ENCODE measurements at regions of chr19 and their contacts with region 1.

Region 1: DNA sequence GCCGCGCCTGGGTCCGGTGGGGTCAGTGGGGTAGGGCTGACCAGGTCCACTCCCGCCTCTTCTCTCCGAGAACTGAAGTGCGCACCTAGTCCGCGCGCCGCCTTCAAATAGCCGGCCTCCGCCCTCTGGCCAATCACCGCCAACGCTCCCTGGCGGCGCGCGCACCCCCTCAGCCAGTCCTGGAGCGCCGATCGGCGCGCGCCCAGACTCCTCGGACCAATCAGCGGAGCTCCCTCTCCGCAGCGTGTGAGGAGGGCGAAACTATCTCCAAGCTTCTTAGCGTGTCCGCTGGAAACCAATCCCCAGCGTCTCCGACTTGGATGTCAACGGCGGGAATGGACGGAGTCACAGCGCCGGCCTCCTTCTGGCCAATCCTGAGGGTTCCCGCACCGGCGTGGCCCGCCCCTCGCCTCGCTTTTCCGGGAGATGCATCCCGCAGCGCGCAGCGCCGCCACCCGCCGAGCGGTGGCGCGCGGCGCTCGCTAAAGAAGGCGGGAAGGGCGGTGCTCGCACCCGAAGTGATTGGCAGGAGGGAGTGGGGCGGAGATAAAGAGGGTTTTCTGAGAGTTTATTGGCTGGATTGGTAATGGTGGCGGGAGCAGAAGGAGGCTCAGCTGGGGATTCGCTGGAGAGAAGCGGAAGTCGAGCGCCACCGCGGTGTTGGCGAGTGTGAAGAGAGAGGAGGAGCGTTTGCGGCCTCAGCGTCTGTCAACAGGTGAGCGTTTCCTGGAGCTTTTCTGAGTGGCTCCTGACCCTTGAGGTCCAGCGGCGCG is at the start of gene ASF1B:
- DNase-seq: peak; percentile 98 to 99
- H3K4me3 ChIP-seq: peak within 1 kb of the TSS; percentile 79
- H3K27ac ChIP-seq: peak within 1 kb of the TSS; percentile 80
- H3K4me1 ChIP-seq: peaks cover 29% of the 10 kb centered on the region
- H3K27me3 ChIP-seq: no peaks in the 10 kb centered on the region
- CTCF ChIP-seq: peak; percentile 65
- total RNA-seq, gene ASF1B: 67.4 and 71.2 TPM in 2 replicates

Region 2: DNA sequence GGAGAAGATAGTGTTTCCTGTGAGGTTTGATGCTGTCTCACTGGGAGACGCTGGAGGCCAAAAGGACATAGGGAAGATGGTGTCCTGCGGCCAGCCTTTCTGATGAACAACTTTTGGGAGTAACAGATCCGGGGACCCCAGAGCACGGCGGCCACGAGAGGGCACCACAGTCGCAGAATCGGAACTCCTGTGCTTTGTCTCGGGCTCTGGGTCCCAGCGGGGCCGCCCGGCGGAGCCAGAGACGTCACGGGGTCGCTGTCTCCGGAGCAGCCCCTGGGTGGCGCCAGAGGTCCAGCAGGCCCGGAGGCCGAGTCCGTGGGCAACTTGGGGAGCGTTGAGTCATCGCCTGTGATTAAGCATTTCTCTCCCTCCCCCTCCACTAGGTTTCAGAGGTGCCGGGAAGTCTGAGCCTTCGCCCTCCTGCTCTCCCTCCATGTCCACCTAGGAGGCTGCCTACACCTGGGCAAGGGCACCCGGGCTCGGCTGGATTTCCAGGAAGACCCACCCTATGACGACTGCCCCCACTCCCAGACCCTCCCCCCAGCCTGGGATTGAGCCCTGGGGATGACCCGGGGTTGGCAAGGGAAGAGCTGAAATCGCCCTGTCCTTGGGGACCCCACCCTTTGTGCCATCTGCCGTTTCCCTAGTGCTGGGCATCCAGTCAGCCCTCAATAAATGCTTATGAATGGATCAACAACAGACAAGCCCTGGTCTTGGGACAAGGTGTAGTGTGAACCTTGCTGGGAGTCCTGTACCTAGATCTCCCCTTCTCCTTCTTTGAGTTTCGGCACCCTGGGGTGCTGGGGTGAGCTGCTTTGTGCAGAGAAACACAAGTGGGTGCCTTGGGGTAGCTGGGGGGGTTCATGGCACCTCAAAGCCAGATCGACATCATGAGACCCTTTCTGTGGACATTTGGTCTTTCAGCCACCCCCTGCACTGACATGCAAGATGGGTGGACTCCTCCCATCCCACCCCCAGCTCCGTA is 256.3 kb before region 1 on chr19:
- CTCF ChIA-PET with region 1: interaction called, 6 read pairs
- POLR2A ChIA-PET with region 1: interaction called, 3 read pairs
- intact Hi-C with region 1: loop called (anchors 1 kb)
- DNase-seq: peak; percentile 91 to 98
- H3K4me3 ChIP-seq: peak overlapping the region; percentile 19; the same call in 1 of the 2 replicates
- H3K27ac ChIP-seq: peak overlapping the region; percentile 63
- H3K4me1 ChIP-seq: peaks cover 16% of the 10 kb centered on the region
- H3K27me3 ChIP-seq: no peaks in the 10 kb centered on the region
- CTCF ChIP-seq: peak; percentile 100

Region 3: GRCh38 chr19:14081325-14082093 is 55.2 kb before region 1 on chr19:
- CTCF ChIA-PET with region 1: interaction called, 7 read pairs
- POLR2A ChIA-PET with region 1: no interaction called
- intact Hi-C with region 1: loop called (anchors 2 kb)
- DNase-seq: peak; percentile 99
- H3K4me3 ChIP-seq: peak overlapping the region; percentile 85
- H3K27ac ChIP-seq: peak overlapping the region; percentile 71
- H3K4me1 ChIP-seq: peaks cover 16% of the 10 kb centered on the region
- H3K27me3 ChIP-seq: no peaks in the 10 kb centered on the region
- CTCF ChIP-seq: peak; percentile 17; the same call in 1 of the 2 replicates

Region 4: DNA sequence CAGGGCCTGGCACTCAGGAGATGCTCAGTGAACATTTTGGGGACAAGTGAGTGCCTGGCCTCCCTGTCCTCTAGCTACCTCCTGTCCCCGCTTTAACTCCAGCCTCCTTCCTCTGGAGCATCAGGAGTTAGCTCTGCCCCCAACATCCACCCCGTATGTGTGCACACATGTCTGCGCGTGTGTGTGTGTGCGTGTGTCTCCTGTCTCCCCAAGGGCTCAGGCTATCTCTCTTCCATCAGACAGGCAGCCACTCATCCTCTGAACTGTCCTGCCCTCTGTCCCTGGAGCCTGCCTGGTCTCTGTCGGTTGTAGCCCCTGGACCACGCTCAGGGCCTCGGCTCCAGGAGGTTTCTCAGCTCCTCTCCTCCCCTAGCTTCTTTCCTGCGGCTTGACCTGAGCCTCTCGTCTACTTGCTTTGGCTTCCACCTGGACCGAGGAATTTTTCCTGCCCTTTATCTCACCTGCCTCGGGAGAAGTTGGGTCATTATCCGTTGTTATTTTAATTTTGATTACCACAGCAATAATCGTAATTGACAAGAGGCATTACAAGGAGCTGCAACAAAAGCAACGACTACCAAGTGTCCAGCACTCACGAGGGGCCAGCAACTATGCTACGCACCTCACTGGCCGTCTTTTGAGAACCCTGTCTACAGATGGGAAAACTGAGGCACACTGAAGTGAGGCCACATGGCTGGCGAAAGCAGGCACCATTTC is 31.7 kb after region 1 on chr19:
- CTCF ChIA-PET with region 1: no interaction called
- POLR2A ChIA-PET with region 1: no interaction called
- intact Hi-C with region 1: no loop called
- DNase-seq: no peak
- H3K4me3 ChIP-seq: no peak overlapping the region
- H3K27ac ChIP-seq: no peak overlapping the region
- H3K4me1 ChIP-seq: no peaks in the 10 kb centered on the region
- H3K27me3 ChIP-seq: no peaks in the 10 kb centered on the region
- CTCF ChIP-seq: no peak

Region 5: DNA sequence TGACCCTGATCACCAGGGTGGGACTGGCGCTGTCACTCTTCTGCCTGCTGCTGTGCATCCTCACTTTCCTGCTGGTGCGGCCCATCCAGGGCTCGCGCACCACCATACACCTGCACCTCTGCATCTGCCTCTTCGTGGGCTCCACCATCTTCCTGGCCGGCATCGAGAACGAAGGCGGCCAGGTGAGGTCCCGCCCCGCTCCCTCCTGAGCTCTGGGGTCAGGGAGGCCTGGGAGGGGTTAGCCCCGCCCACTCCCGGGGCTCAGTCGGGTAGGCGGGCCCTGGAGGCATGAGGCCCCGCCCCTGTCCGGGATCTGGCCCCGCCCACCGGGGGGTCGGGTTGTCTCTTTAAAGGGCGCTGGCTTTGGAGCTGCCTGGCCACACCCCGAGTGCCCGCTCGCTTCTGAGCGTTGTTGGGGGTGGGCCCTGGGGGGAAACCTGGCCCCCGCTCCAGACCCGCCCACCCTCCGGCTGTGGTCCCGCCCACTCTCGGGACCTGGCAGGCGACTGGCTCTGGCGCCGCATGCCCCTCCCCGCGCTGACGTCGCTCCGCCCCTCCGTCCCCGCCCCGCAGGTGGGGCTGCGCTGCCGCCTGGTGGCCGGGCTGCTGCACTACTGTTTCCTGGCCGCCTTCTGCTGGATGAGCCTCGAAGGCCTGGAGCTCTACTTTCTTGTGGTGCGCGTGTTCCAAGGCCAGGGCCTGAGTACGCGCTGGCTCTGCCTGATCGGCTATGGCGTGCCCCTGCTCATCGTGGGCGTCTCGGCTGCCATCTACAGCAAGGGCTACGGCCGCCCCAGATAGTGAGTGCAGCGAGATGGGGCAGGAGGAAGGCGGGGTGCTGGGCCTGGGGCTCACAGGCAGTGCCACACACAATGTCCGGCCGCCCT is 269.3 kb after region 1 on chr19:
- CTCF ChIA-PET with region 1: interaction called, 6 read pairs
- POLR2A ChIA-PET with region 1: no interaction called
- intact Hi-C with region 1: loop called (anchors 5 kb)
- DNase-seq: peak; percentile 81 to 89
- H3K4me3 ChIP-seq: peak overlapping the region; percentile 37; the same call in 1 of the 2 replicates
- H3K27ac ChIP-seq: no peak overlapping the region
- H3K4me1 ChIP-seq: 0 out of 2 replicates have a peak, but pooled peaks cover 10% of the 10 kb centered on the region
- H3K27me3 ChIP-seq: no peaks in the 10 kb centered on the region
- CTCF ChIP-seq: peak; percentile 70

Region 6: DNA sequence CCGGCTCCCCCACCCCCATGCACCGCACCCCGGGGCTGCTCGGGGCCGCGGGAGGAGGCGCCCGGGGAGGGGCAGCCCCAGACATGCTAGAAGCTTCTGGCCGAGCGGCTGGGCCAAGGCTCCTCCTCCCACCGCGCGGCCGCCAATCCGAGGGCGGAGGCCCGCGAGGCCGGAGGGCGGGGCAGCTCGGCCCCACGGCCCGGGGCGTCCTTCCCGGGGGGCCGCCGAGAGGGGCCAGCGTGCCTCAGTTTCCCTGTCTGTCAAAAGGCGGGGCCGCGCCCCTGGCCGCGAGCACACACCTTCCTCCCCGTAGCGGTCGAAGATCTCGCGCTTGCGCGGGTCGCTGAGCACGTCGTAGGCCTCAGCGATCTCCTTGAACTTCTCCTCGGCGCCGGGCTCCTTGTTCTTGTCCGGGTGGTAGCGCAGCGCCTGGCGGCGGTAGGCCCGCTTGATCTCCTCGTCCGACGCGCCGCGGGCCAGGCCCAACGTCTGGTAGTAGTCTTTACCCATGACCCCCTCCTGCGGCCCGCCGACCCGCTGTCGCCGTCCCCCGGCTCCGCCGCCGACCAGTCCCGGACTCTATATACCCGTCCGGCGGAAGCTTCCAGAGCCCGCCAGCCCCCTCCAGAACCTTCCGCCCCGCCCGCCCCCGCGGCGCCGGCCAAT is 381.3 kb after region 1 on chr19 and contains the start of gene DNAJB1:
- CTCF ChIA-PET with region 1: no interaction called
- POLR2A ChIA-PET with region 1: no interaction called
- intact Hi-C with region 1: loop called (anchors 10 kb)
- DNase-seq: peak in 1 of 2 experiments; percentile 80
- H3K4me3 ChIP-seq: peak within 1 kb of the TSS; percentile 99
- H3K27ac ChIP-seq: peak within 1 kb of the TSS; percentile 94
- H3K4me1 ChIP-seq: peaks cover 46% of the 10 kb centered on the region
- H3K27me3 ChIP-seq: no peaks in the 10 kb centered on the region
- CTCF ChIP-seq: no peak
- total RNA-seq, gene DNAJB1: 159 and 199 TPM in 2 replicates

Region 7: DNA sequence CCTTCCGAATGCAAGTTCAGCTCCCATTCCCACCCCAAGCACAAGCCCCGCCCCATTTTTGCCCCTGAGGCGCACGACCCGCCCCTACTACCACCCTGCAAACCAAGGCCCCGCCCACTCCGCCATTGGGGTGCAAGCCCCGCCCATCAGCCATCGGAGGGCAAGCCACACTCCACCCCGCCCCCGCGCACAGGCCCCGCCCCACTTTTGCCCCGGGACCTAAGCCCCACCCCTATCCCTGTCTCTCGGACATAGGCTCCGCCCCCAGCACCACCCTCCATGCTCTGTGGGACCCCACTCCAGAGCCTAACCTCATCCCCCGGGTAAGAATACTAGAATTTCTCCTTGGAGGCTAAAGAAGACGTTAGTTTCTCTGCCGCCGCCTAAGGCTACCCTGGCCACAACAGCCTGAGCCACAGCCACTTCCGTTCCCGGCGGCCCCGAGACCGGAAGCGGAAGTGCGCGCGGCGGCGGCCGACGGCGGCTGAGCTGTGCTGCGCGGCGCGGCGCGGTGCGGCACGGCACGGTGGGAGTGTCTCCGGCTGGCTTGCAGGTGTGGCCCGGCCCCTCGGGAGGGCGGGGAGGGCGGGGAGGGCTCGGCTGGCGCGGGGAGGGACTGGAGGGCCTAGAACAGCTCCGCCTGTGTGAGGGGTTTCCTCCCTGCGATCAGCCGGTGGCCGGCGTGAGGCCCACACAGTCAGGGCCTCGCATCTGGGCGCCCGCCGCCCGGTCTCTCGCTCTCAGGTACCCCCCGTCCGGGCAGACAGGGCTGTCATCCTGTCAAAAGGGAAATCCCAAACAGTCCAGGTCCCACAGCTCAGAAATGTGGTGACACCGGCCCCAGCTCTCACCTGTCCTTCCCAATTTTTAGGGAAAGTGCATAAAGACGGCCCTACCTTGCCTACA is 553.2 kb after region 1 on chr19 and contains the start of gene ZNF333:
- CTCF ChIA-PET with region 1: interaction called, 5 read pairs
- POLR2A ChIA-PET with region 1: interaction called, 16 read pairs
- intact Hi-C with region 1: loop called (anchors 5 kb)
- DNase-seq: peak; percentile 78 to 92
- H3K4me3 ChIP-seq: peak within 1 kb of the TSS; percentile 69
- H3K27ac ChIP-seq: peak within 1 kb of the TSS; percentile 88
- H3K4me1 ChIP-seq: peaks cover 16% of the 10 kb centered on the region
- H3K27me3 ChIP-seq: no peaks in the 10 kb centered on the region
- CTCF ChIP-seq: no peak
- total RNA-seq, gene ZNF333: 10.1 and 10.5 TPM in 2 replicates